Sciatic nerve (tissue), 2 donors: ENCODE measurements at regions of chr7 and their contacts with region 1.

Region 1: DNA sequence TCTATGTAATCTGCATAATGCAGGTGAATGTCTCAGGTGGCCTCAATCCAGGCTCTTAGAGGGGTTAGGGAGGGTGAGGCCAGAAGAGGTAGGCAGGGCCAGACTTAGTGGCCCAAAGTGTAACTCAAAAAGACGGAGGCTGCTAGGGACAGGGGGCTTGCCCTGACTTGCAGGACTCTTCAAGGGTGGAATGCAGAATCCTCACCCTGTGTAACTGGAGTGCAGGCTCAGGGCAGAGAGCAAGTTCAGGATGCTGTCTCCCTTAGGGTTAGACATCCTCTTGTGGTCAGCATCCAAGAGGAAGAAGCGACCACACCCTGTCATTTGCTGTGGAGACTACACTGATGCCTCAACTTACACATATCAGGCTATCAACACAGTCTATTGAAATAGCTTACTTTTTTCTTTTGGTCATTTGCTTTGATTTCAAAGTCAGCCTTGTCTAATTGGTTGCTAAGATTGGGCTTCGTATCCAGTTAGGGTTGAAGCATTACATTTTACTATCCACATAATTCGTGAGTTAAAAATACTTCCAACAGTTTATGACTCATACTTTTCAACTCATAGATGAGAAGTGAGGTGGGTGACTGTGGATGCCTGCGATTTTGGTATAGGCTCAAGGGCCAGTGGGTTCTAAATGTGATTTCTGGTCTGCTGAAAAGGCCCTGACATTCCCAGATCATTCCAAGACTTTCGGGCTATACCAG is 563.6 kb downstream of the SUGCT start:
- DNase-seq: no peak
- ATAC-seq: no peak

Region 2: DNA sequence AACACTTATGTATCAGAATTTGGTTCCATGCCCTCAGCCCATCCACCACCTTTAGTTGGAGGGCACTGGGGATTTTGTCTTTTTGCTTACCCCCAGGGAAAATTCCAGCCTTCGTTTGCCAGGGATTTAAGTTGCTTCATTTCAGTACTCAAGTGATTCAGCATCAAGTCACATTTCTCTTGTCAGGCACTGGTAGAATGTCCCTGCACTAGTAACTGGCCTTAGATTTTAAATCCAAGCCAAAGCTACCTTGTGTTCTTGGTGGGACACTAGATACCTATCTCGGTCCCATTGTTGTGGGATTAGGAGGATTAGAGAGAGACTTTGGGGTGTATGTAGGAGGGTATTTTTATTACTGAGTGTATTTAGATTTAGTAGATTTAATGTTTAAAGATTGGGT is 49.5 kb after region 1 on chr7:
- intact Hi-C with region 1: no loop called
- DNase-seq: no peak
- ATAC-seq: no peak

Region 3: GRCh38 chr7:42624471-42624870 is 1926.1 kb after region 1 on chr7:
- intact Hi-C with region 1: loop called (anchors 10 kb)
- DNase-seq: no peak
- ATAC-seq: no peak